ENCODE measurements at regions of chr5 and their contacts with region 1.

Region 1: DNA sequence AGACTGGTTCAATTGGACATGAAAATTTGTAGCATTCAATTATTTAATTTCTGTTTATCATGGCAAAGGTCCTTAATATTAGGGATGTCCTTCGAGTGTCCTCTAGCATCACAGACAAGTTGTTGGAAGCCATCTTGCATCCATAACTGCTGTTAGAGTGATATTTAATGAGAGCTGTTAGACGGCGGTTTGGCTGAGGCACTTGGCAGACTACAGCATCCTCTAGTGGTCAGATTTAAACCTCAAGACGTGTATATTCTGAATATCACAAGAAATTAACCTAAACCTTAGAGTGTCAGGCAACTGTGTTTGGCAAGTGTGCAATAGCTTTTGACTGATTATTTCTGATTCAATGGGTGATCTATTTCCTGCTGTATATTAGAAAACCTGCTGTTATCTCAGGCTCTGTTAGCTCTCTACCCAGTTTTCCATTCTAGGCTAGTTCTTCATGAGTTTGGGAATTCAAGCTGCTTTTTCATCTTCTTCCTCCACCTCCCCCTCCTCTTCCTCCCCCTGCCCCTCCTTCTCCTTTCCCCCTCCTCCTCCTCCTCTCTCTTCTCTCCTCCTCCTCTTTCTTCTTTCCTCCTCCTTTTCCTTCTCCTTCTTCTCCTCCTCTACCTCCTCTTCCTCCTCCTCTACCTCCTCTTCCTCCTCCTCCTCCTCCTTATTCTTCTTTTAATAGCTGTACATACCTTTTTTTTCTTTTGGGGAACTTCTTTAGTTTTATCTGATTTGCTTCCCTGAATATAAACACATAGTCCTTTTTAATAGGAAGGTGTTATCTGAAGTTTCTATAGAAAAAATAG is 8.6 kb downstream of the SPINK1 start:
- DNase-seq: peak; percentile 46
- H3K27ac ChIP-seq: no peak overlapping the region
- CTCF ChIP-seq: peak; percentile 89

Region 2: GRCh38 chr5:147628058-147628895 is 194.6 kb before region 1 on chr5:
- CTCF ChIA-PET with region 1: interaction called, 69 read pairs
- POLR2A ChIA-PET with region 1: no interaction called
- DNase-seq: peak; percentile 60
- H3K27ac ChIP-seq: no peak overlapping the region
- CTCF ChIP-seq: peak; percentile 84